AG04449 (cell line): ENCODE measurements at regions of chr2 and their contacts with region 1.

Region 1: DNA sequence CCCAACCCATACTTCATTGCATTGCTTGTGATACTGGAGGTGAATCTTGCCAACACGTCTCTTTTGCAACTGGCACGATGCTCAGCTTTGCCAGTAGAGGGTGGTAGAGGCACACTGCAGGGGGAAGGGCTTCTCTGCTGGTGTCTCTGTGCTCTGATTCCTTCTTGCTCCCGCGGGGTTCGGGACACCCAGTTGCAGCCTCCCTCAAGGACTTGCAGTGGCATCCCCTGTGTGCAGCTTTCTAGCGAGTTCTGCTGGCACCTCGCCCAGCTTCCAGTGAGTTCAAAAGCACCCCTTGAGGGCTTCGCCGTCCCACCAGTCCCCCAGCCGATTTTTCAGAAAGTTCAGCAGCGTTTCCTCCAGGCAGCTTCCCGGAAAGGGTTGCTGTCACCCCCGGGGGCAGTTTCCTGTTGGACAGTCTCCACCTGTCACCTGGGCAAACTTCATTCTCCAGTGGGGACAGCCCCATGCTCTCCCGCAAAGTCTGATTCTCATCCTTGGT is 35.3 kb upstream of the EN1 start:
- DNase-seq: peak; percentile 5
- H3K4me3 ChIP-seq: peak overlapping the region; percentile 51
- CTCF ChIP-seq: peak; percentile 98

Region 2: GRCh38 chr2:118865106-118865505 is 17.7 kb before region 1 on chr2:
- CTCF ChIA-PET with region 1: interaction called, 91 read pairs
- POLR2A ChIA-PET with region 1: no interaction called
- DNase-seq: no peak
- H3K4me3 ChIP-seq: no peak overlapping the region
- CTCF ChIP-seq: peak; percentile 71

Region 3: GRCh38 chr2:119264781-119265692 is 382.3 kb after region 1 on chr2:
- CTCF ChIA-PET with region 1: interaction called, 11 read pairs
- POLR2A ChIA-PET with region 1: no interaction called
- DNase-seq: no peak
- H3K4me3 ChIP-seq: no peak overlapping the region
- CTCF ChIP-seq: peak; percentile 90

Region 4: DNA sequence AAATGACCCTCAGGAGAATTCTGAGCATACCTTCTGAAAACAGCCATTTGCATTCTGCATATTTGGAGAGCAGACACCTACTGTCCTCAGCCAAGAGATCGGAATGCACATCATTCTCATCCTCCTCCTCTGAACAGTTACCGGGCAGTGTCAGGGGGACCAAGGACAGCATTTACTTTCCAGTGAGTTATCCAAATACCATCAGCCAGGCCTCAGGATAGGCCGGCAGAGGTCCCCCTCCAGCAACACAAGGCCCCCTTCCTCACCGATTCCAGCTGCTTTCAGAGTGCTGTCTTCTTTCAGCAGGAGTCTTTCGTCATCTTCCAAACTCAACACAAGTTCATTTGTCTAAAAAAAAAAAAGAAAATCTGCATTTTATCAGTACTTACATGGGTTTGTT is 428.6 kb after region 1 on chr2:
- CTCF ChIA-PET with region 1: interaction called, 18 read pairs
- POLR2A ChIA-PET with region 1: no interaction called
- DNase-seq: no peak
- H3K4me3 ChIP-seq: no peak overlapping the region
- CTCF ChIP-seq: no peak